Gastrocnemius medialis (tissue), 4 donors: ENCODE measurements at regions of chr13 and their contacts with region 1.

Region 1: DNA sequence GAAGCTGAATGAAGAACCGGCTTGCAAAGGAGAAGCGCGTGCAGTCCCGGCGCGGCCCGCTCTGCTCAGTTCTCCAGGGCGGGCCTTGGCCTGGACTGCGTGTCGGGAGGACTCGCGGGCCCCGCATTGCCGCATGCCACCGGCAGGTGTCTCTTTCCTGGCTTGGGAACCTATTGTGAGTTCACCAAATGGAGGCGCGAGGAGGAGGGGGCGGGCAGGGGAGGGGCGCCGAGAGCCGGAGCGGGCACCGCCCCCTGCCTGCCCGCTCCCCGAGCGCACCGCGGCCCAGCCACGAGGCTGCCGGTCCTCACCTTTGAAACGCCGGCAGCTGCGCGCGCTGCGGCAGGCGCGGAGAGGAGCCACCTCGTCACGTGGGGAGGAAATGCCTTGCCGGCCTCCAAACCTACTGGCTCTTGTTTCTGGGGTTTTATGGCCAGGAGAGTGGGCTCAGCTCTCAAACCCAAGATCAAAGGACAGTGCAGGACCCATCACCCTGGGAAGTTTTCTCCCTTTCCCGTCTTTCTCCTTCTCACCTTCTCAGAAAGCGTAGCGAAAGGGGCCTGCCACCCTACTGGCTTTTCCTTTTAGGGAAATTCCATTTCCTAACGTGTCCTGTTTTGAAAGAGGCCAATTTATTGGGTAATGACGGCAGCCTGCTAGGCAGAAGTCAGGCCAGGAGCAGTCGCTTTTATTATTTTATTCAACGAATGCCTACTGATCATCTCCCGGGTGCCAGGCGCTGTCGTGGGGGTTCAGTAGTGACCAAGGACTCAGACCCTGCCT is 13.8 kb upstream of the UBE2L5 start:
- DNase-seq: peak; percentile 91 to 95
- ATAC-seq: peak; percentile 93 to 96
- H3K4me3 ChIP-seq: peak overlapping the region; percentile 48 to 59 (median 52)
- H3K27ac ChIP-seq: peak overlapping the region; percentile 84 to 91 (median 88)
- H3K4me1 ChIP-seq: peaks cover 5 to 15% of the 10 kb centered on the region in 2 donors
- H3K27me3 ChIP-seq: no peaks in the 10 kb centered on the region
- CTCF ChIP-seq: peak; percentile 73 to 94 (median 86)
- POLR2A ChIP-seq: peak in 1 of 2 donors; percentile 12

Region 2: DNA sequence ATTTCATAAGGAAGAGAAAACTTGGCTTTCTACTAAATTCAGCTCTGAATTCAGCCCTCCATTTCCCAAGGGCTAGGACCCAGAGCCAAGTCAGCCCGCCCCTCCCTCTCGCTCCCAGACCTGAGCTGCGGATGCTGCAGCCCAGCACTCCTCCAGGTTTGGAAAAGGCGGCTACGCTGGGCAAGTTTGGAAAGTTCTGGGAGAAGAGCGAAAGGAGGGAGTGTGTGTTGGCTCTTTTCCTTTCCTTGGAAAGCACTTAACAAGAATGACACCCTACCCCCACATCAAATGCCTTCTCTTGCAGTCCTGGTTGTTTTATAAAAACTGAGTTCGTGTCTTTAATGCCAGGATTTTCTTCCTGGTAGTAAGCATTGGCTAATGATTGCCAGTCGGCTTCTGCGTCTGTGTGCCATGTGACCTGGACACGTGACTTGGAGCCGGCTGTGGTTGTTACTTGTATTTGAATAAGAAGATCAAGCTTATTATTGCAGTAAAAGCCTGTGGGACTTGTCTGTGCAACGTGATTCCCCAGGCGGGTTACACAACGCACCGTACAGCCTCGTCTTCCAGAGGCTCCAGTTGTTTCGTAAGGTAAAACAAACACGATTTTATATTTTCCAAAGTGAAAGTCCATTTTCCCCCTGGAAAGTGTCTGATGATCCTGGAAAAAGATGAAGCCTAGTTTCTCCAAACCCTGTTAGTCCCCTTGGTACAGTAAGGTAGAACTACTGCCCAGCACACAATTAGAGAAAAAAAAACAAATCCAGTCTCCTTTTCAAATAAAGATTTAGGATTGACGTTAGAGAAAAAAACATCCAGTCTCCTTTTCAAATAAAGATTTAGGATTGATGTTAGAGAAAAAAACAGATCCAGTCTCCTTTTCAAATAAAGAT is 13.1 kb before region 1 on chr13:
- in situ Hi-C with region 1: no loop called
- intact Hi-C with region 1: loop called (anchors 1 kb)
- DNase-seq: peak; percentile 88 to 96
- ATAC-seq: peak; percentile 95 to 97
- H3K4me3 ChIP-seq: peak overlapping the region; percentile 59 to 80 (median 69)
- H3K27ac ChIP-seq: peak overlapping the region; percentile 72 to 86 (median 83)
- H3K4me1 ChIP-seq: peaks cover 0 to 7% of the 10 kb centered on the region in 2 donors
- H3K27me3 ChIP-seq: no peaks in the 10 kb centered on the region
- CTCF ChIP-seq: no peak
- POLR2A ChIP-seq: peak; percentile 28 to 41

Region 3: GRCh38 chr13:30422054-30422839 is 13.7 kb after region 1 on chr13 and contains the start of gene UBE2L5:
- in situ Hi-C with region 1: no loop called
- intact Hi-C with region 1: loop called (anchors 1 kb)
- DNase-seq: peak; percentile 65 to 76
- ATAC-seq: peak; percentile 64 to 69
- H3K4me3 ChIP-seq: peak within 1 kb of the TSS; percentile 64 to 95 (median 77)
- H3K27ac ChIP-seq: peak within 1 kb of the TSS; percentile 95 to 99 (median 98)
- H3K4me1 ChIP-seq: peaks cover 9 to 10% of the 10 kb centered on the region in 2 donors
- H3K27me3 ChIP-seq: no peaks in the 10 kb centered on the region
- CTCF ChIP-seq: no peak
- POLR2A ChIP-seq: peak; percentile 70 to 77
- total RNA-seq, gene UBE2L5: not detected

Region 4: DNA sequence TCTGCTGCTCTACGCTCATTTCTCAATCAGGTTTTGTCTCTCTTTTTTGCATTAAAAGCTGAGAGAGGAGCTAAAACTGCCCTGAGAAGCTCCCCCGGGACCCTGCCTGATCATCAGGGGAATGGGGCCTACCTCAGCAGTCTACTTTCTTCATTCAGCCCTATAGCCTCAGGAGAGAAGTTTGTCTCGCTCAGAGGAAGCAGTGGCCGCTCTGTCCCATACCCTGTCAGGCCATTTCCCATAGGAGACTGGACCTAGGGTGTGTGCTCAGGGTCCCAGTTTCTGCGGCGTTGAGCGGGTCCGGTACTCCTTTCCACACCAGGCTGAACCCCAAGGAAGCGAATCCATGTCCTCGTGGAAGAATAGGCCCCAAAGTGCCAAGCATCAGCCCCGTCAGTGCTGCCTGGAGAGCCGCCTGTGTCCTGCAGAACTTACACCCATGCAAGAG is 35.5 kb after region 1 on chr13:
- in situ Hi-C with region 1: no loop called
- intact Hi-C with region 1: loop called (anchors 1 kb)
- DNase-seq: no peak
- ATAC-seq: no peak
- H3K4me3 ChIP-seq: no peak overlapping the region
- H3K27ac ChIP-seq: no peak overlapping the region
- H3K4me1 ChIP-seq: peaks cover 12 to 15% of the 10 kb centered on the region in 2 donors
- H3K27me3 ChIP-seq: no peaks in the 10 kb centered on the region
- CTCF ChIP-seq: no peak
- POLR2A ChIP-seq: no peak

Region 5: DNA sequence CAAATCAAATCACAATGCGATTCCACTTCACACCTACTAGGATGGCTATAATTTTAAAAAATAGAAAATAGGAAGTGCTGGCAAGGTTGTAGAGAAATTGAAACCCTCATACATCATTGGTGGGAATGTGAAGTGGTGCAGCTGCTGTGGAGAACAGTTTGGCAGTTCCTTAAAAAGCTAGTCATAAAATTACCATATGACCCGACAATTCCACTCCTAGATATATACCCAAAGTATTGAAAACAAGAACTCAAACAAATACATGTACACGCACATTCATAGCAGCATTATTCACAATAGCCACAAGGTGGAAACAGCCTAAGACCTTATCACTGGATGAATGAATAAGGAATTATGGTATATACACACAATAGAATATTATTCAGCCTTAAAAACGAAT is 45.2 kb after region 1 on chr13:
- in situ Hi-C with region 1: loop called in 1 of 4 experiments (anchors 10 kb)
- intact Hi-C with region 1: no loop called
- DNase-seq: no peak
- ATAC-seq: no peak
- H3K4me3 ChIP-seq: no peak overlapping the region
- H3K27ac ChIP-seq: no peak overlapping the region
- H3K4me1 ChIP-seq: no peaks in the 10 kb centered on the region
- H3K27me3 ChIP-seq: no peaks in the 10 kb centered on the region
- CTCF ChIP-seq: no peak
- POLR2A ChIP-seq: no peak

Region 6: DNA sequence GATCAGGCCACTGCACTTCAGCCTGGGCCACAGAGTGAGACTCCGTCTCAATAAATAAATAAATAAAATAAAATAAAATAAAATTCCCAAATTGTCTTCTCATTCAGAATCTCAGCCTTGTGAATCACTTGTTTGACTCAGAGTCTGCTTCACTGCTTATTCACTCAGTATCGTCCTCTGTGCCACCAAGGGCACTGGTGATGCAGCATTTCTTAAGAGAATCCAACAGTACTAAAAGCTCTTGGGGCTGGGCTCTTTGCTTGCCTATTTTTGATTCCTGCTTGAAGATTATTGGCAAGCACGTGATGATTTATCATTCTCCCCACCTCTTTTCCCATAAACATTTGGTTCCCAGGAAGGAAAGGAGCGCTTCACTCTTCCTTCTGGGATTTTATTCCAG is 112.1 kb after region 1 on chr13:
- in situ Hi-C with region 1: no loop called
- intact Hi-C with region 1: no loop called
- DNase-seq: no peak
- ATAC-seq: no peak
- H3K4me3 ChIP-seq: no peak overlapping the region
- H3K27ac ChIP-seq: no peak overlapping the region
- H3K4me1 ChIP-seq: no peaks in the 10 kb centered on the region
- H3K27me3 ChIP-seq: no peaks in the 10 kb centered on the region
- CTCF ChIP-seq: no peak
- POLR2A ChIP-seq: no peak